ENCODE measurements at regions of chr10 and their contacts with region 1.

Region 1: GRCh38 chr10:122258136-122259074 is 12.7 kb upstream of the BTBD16 start:
- DNase-seq: peak; percentile 69
- ATAC-seq: peak; percentile 72
- H3K4me3 ChIP-seq: no peak overlapping the region
- H3K27ac ChIP-seq: no peak overlapping the region
- H3K4me1 ChIP-seq: peaks cover 6% of the 10 kb centered on the region; the same call in 1 of the 2 replicates
- H3K27me3 ChIP-seq: no peaks in the 10 kb centered on the region
- CTCF ChIP-seq: no peak
- POLR2A ChIP-seq: no peak
- RAD21 ChIP-seq: no peak

Region 2: GRCh38 chr10:122213766-122214165 is 44.6 kb before region 1 on chr10:
- CTCF ChIA-PET with region 1: no interaction called
- POLR2A ChIA-PET with region 1: no interaction called
- dilution Hi-C with region 1: no loop called
- in situ Hi-C with region 1: no loop called
- intact Hi-C with region 1: no loop called
- DNase-seq: no peak
- ATAC-seq: no peak; the same call in 1 of the 2 replicates
- H3K4me3 ChIP-seq: no peak overlapping the region
- H3K27ac ChIP-seq: no peak overlapping the region
- H3K4me1 ChIP-seq: no peaks in the 10 kb centered on the region; the same call in 1 of the 2 replicates
- H3K27me3 ChIP-seq: no peaks in the 10 kb centered on the region
- CTCF ChIP-seq: no peak
- POLR2A ChIP-seq: no peak
- RAD21 ChIP-seq: no peak

Region 3: DNA sequence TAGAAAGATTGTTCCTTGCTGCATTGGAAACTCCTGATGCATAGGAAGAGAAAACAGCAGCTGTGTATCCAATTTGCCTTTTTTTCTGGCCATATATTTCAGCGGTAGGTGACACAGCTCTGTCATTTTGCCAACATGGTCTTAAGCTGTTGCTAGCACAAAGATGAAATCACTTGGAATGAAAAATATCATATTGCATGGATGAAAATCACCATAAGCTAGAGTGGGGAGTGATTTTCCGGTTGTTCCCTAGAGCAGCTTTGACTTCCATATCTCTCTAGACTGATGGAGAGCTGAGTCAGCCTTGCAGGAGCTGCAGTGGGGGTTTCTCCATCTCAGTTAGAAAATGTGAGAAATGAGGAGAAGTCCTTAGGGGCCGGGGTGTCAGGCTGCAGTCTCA is 25.6 kb before region 1 on chr10:
- CTCF ChIA-PET with region 1: no interaction called
- POLR2A ChIA-PET with region 1: no interaction called
- dilution Hi-C with region 1: no loop called
- in situ Hi-C with region 1: no loop called
- intact Hi-C with region 1: loop called (anchors 2 kb)
- DNase-seq: peak; percentile 95
- ATAC-seq: peak; percentile 94
- H3K4me3 ChIP-seq: no peak overlapping the region
- H3K27ac ChIP-seq: peak overlapping the region; percentile 0; the same call in 1 of the 2 replicates
- H3K4me1 ChIP-seq: peaks cover 8% of the 10 kb centered on the region; the same call in 1 of the 2 replicates
- H3K27me3 ChIP-seq: no peaks in the 10 kb centered on the region
- CTCF ChIP-seq: no peak
- POLR2A ChIP-seq: no peak; the same call in 1 of the 2 replicates
- RAD21 ChIP-seq: no peak